ENCODE measurements at regions of chr1 and their contacts with region 1.

Region 1: DNA sequence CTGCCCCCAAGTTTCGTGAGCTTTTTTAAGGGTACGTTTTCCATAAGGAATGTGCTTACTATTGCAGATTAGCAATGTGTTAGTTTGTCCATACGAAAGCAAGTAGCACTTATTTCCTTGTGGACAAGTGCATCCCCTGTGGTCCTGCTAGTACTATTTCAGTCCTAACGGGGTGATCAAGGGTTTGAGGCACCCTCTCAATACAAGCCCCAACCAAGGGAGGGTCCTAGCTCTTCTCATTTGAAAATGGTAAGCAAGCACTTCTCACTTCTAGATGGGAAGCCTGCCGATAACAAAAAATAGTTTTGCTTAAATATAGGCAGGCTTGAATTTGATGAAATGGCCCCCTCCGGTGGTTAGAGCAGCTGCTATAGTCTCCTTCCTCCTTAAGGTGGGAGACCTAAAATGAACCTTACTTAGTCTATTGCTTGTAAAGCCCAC is 64.0 kb upstream of the HMCN1 start:
- DNase-seq: peak; percentile 28
- ATAC-seq: peak; percentile 69 to 76

Region 2: GRCh38 chr1:185238447-185238846 is 431.8 kb before region 1 on chr1:
- intact Hi-C with region 1: loop called (anchors 5 to 10 kb)
- DNase-seq: no peak
- ATAC-seq: no peak

Region 3: GRCh38 chr1:185244015-185244747 is 426.0 kb before region 1 on chr1:
- intact Hi-C with region 1: loop called (anchors 5 to 10 kb)
- DNase-seq: no peak
- ATAC-seq: peak in 1 of 2 donors; percentile 79

Region 4: DNA sequence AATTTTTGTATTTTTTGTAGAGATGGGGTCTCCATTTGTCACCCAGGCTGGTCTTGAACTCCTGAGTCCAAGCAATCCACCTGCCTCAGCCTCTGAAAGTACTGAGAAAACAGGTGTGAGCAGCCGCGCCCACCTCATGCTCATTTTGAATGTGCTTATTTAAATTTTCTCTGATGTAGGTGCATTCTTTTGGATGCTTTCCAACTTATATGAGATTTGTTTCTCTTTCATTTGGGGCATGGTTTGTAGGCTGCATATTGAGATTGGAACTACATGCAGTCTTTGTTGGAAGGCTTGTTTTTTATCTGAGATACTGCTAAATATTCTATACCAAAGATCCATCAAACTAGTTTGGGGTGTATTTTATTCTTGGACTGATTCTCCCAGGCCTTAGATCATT is 272.2 kb before region 1 on chr1:
- intact Hi-C with region 1: no loop called
- DNase-seq: no peak
- ATAC-seq: no peak

Measured in left cardiac atrium (tissue), 4 donors.